Naive thymus-derived CD4-positive, alpha-beta T cell (primary cell): ENCODE measurements at regions of chrX and their contacts with region 1.

Region 1: DNA sequence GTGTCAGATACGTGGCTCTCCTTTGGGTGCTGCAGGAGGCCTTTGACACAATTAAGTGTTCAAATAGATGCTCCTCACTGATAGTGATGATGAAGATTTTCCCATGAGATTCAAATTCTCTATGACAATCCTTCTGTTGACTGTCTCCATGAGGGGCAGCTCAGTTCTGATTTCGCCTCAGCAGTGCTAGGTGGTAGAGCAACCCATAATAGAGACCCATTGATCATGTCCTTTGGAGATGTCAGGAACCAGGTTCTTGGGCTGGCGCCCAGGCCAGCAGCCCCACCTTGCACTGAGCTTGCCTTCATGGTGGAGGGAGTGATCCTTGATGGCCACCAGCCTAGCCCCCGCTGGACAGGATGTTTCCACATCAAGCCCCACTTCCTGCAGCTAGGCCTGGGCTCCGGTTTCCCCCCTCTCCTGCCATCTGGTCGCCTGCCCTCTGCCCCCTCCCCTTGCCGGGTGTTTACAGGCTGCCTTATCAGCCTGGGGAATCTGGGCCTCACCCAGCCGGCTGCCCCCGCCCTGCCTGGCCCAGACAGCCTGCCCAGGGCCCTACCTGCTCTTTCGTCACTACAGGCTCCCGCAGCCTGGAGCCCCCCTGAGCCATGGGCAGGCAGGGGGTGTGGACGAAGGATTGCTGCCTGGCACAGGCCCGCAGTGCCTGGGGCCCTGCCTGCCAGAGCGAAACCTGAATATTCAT is 12.6 kb downstream of the ELF4 start:
- DNase-seq: peak in 3 of 9 donors; percentile 29 to 54 (median 37)
- ATAC-seq: peak; percentile 89
- H3K4me3 ChIP-seq: peak overlapping the region; percentile 4
- H3K4me3 Mint-ChIP-seq: peak overlapping the region; percentile 60 to 82 (median 66)
- H3K27ac ChIP-seq: peak overlapping the region; percentile 62
- H3K27ac Mint-ChIP-seq: peak overlapping the region; percentile 29 to 94 (median 89)
- H3K4me1 ChIP-seq: peaks cover 43 to 59% of the 10 kb centered on the region in 2 donors
- H3K4me1 Mint-ChIP-seq: peaks cover 17 to 86% (median 57%) of the 10 kb centered on the region in 7 donors
- H3K27me3 ChIP-seq: no peaks in the 10 kb centered on the region
- H3K27me3 Mint-ChIP-seq: no peaks in the 10 kb centered on the region

Region 2: DNA sequence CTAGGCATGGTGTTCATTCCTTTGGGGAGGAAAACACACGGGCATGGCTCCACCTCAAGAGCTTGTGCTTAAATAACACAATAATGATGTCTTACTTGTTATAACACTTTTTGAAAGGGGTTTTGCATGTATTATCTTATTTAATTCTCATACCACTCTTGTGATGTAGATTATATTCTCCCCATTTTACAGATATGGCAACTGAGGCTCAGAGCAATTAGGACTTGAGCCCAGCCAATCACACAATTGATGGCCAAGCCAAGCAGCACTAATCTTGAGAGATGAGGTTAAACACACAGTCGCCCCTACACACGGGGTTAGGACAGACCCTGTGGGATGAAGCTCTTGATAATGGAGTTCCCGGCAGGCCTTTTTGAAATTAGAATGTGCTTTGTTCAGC is 70.1 kb before region 1 on chrX:
- CTCF ChIA-PET with region 1: no interaction called
- POLR2A ChIA-PET with region 1: no interaction called
- intact Hi-C with region 1: no loop called
- DNase-seq: no peak
- ATAC-seq: no peak
- H3K4me3 ChIP-seq: no peak overlapping the region
- H3K4me3 Mint-ChIP-seq: no peak overlapping the region
- H3K27ac ChIP-seq: no peak overlapping the region
- H3K27ac Mint-ChIP-seq: no peak overlapping the region
- H3K4me1 ChIP-seq: peaks cover 4 to 13% of the 10 kb centered on the region in 2 donors
- H3K4me1 Mint-ChIP-seq: peaks cover 0 to 19% (median 10%) of the 10 kb centered on the region in 7 donors
- H3K27me3 ChIP-seq: no peaks in the 10 kb centered on the region
- H3K27me3 Mint-ChIP-seq: no peaks in the 10 kb centered on the region

Region 3: GRCh38 chrX:130086447-130087206 is 11.0 kb before region 1 on chrX:
- CTCF ChIA-PET with region 1: interaction called, 9 read pairs
- POLR2A ChIA-PET with region 1: interaction called, 44 read pairs
- intact Hi-C with region 1: loop called (anchors 1 kb)
- DNase-seq: peak in 8 of 9 donors; percentile 64 to 79 (median 74)
- ATAC-seq: peak; percentile 74
- H3K4me3 ChIP-seq: peak overlapping the region; percentile 67
- H3K4me3 Mint-ChIP-seq: peak overlapping the region; percentile 86 to 93 (median 89)
- H3K27ac ChIP-seq: peak overlapping the region; percentile 66
- H3K27ac Mint-ChIP-seq: peak overlapping the region; percentile 76 to 96 (median 91)
- H3K4me1 ChIP-seq: peaks cover 22 to 35% of the 10 kb centered on the region in 2 donors
- H3K4me1 Mint-ChIP-seq: peaks cover 15 to 71% (median 60%) of the 10 kb centered on the region in 7 donors
- H3K27me3 ChIP-seq: no peaks in the 10 kb centered on the region
- H3K27me3 Mint-ChIP-seq: no peaks in the 10 kb centered on the region